H1 (cell line): ENCODE measurements at regions of chr5 and their contacts with region 1.

Region 1: GRCh38 chr5:115309751-115310370 is 13.4 kb upstream of the CCDC112 start:
- DNase-seq: no peak
- H3K4me3 ChIP-seq: no peak overlapping the region
- H3K27ac ChIP-seq: no peak overlapping the region
- H3K4me1 ChIP-seq: peaks cover 0 to 5% (median 0%) of the 10 kb centered on the region in 4 experiments; a peak in 2 of 7 replicates
- H3K27me3 ChIP-seq: no peaks in the 10 kb centered on the region
- CTCF ChIP-seq: peak in 2 of 3 experiments; percentile 24 to 42; a peak in 2 of 4 replicates
- EP300 ChIP-seq: no peak
- POLR2A ChIP-seq: no peak
- RAD21 ChIP-seq: peak in 1 of 2 experiments; percentile 63

Region 2: GRCh38 chr5:115296124-115297022 is 13.5 kb before region 1 on chr5 and contains the start of gene CCDC112:
- CTCF ChIA-PET with region 1: interaction called, 25 read pairs
- POLR2A ChIA-PET with region 1: interaction called, 5 read pairs
- DNase-seq: peak; percentile 73 to 91
- H3K4me3 ChIP-seq: peak within 1 kb of the TSS; percentile 87 to 98 (median 90)
- H3K27ac ChIP-seq: peak within 1 kb of the TSS; percentile 53; the same call in 1 of the 2 replicates
- H3K4me1 ChIP-seq: peaks cover 0 to 3% (median 1%) of the 10 kb centered on the region in 4 experiments; a peak in 2 of 7 replicates
- H3K27me3 ChIP-seq: 0 out of 7 replicates have a peak, but pooled peaks cover 0 to 2% (median 0%) of the 10 kb centered on the region in 4 experiments
- CTCF ChIP-seq: no peak
- EP300 ChIP-seq: no peak
- POLR2A ChIP-seq: peak; percentile 81 to 88
- RAD21 ChIP-seq: peak in 1 of 2 experiments; percentile 8; a peak in 1 of 4 replicates
- total RNA-seq, gene CCDC112: 13.2 and 15.6 TPM in 2 replicates

Region 3: GRCh38 chr5:115321309-115321708 is 11.4 kb after region 1 on chr5:
- CTCF ChIA-PET with region 1: interaction called, 14 read pairs
- POLR2A ChIA-PET with region 1: no interaction called
- DNase-seq: no peak
- H3K4me3 ChIP-seq: no peak overlapping the region
- H3K27ac ChIP-seq: no peak overlapping the region
- H3K4me1 ChIP-seq: no peaks in the 10 kb centered on the region; a peak in 1 of 7 replicates
- H3K27me3 ChIP-seq: no peaks in the 10 kb centered on the region
- CTCF ChIP-seq: no peak
- EP300 ChIP-seq: no peak
- POLR2A ChIP-seq: no peak
- RAD21 ChIP-seq: no peak

Region 4: GRCh38 chr5:115336201-115336720 is 26.4 kb after region 1 on chr5:
- CTCF ChIA-PET with region 1: interaction called, 20 read pairs
- POLR2A ChIA-PET with region 1: no interaction called
- DNase-seq: no peak
- H3K4me3 ChIP-seq: no peak overlapping the region
- H3K27ac ChIP-seq: no peak overlapping the region
- H3K4me1 ChIP-seq: no peaks in the 10 kb centered on the region
- H3K27me3 ChIP-seq: no peaks in the 10 kb centered on the region
- CTCF ChIP-seq: no peak
- EP300 ChIP-seq: no peak
- POLR2A ChIP-seq: no peak
- RAD21 ChIP-seq: no peak

Region 5: GRCh38 chr5:115377468-115378217 is 67.8 kb after region 1 on chr5:
- CTCF ChIA-PET with region 1: interaction called, 17 read pairs
- POLR2A ChIA-PET with region 1: no interaction called
- DNase-seq: no peak
- H3K4me3 ChIP-seq: no peak overlapping the region
- H3K27ac ChIP-seq: no peak overlapping the region
- H3K4me1 ChIP-seq: no peaks in the 10 kb centered on the region; a peak in 1 of 7 replicates
- H3K27me3 ChIP-seq: no peaks in the 10 kb centered on the region
- CTCF ChIP-seq: no peak; a peak in 1 of 4 replicates
- EP300 ChIP-seq: no peak
- POLR2A ChIP-seq: no peak
- RAD21 ChIP-seq: peak in 1 of 2 experiments; percentile 41; a peak in 2 of 4 replicates

Region 6: DNA sequence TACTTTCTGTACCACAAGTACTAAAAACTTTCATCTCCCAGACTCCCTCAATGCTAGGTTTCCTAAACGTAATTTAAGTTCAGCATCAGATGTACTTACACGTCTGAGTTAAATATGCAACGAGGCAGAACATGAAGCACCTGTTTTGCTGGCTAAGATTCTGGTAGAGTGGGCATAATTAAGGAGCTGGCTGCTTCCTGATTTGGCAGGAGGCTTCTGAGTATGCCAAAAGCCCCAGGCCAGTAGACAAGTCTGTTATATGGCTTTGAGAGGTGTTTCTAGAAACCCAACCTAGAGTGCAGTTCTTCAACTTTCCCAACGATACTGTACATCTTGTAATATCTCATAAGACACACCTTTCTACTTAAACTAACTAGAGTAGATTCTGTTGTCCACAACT is 278.8 kb after region 1 on chr5:
- CTCF ChIA-PET with region 1: interaction called, 16 read pairs
- POLR2A ChIA-PET with region 1: no interaction called
- DNase-seq: no peak
- H3K4me3 ChIP-seq: no peak overlapping the region
- H3K27ac ChIP-seq: no peak overlapping the region
- H3K4me1 ChIP-seq: no peaks in the 10 kb centered on the region
- H3K27me3 ChIP-seq: no peaks in the 10 kb centered on the region
- CTCF ChIP-seq: no peak
- EP300 ChIP-seq: no peak
- POLR2A ChIP-seq: no peak
- RAD21 ChIP-seq: no peak